Mucosa of descending colon (tissue), 3 donors: ENCODE measurements at regions of chr1 and their contacts with region 1.

Region 1: DNA sequence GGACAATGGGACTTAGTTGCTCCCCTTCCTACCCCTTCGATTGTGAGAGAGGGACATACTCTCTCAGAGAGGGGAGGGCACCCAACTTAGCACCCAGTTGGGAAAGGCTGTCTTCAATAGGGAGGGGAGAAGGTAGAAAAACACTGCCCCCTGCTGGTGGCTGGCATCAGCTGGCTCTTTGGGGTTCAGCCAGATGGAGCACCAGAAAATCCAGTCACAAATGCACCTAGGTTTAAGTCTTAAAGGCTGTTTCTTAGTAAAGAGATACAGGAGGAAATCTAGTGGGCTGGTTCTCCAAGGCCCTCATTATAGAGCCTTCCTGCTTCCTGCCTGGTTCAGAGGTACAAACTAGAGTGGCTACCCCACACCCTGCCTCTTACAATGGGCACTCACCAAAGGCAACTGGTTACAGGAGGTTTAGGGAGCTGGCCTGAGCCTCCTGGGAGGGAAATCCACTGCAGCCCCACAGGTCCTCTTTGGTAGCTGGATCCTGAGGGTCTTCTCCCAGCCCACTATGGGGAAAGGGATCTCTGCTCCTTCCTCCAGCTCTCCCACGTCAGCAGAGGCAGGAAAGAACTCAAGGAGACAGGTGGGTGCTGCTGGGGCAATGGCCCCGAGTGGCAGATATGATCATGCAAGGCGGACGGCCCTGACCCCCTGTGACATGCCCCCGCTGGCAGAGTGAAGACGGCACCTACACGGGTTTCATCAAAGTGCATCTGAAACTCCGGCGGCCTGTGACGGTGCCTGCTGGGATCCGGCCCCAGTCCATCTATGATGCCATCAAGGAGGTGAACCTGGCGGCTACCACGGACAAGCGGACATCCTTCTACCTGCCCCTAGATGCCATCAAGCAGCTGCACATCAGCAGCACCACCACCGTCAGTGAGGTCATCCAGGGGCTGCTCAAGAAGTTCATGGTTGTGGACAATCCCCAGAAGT is 28.3 kb downstream of the EIF2D start:
- DNase-seq: peak in 2 of 3 donors; percentile 81 to 93
- ATAC-seq: peak; percentile 69
- H3K4me3 ChIP-seq: no peak overlapping the region
- H3K4me1 ChIP-seq: peaks cover 2% of the 10 kb centered on the region
- CTCF ChIP-seq: peak; percentile 79

Region 2: GRCh38 chr1:206489980-206490770 is 93.8 kb before region 1 on chr1:
- intact Hi-C with region 1: loop called in 1 of 2 experiments (anchors 5 kb)
- DNase-seq: peak in 2 of 3 donors; percentile 79 to 82
- ATAC-seq: peak; percentile 89
- H3K4me3 ChIP-seq: no peak overlapping the region
- H3K4me1 ChIP-seq: no peaks in the 10 kb centered on the region
- CTCF ChIP-seq: peak; percentile 70

Region 3: DNA sequence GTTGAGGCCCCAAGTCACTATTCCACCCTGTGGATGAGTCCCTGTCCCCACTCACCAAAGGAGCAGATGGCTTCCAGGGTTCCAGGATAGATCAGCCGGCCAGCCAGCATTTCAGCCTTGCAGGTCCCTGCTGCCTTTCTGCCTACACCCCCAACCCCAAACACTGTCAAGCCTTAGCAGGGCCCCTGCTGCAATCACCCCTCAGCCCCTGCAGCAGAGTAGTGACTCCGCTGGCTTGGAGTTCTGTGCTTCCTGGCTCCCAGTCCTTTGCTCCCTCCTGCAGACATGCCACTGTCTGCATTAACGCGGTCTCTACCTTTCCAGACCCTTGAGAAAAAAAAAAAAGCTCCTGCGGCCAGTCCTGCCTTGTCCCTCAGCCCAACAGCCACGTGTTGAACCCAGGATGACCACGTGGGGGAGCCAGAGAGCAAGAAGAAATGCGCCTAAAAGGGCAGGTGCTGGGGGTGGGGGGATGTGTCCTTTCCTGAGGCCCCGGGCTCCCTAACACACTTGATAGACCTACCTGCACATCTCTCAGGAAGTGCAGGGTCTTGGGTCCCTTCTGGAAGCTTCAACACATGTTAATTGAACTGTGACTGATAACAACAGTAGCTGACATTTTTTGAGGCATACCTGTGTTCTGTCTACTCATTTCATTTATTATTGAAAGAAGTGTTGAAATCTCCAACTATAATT is 39.3 kb before region 1 on chr1:
- intact Hi-C with region 1: loop called in 1 of 2 experiments (anchors 5 kb)
- DNase-seq: peak in 2 of 3 donors; percentile 84 to 85
- ATAC-seq: peak; percentile 79
- H3K4me3 ChIP-seq: no peak overlapping the region
- H3K4me1 ChIP-seq: peaks cover 6% of the 10 kb centered on the region
- CTCF ChIP-seq: peak; percentile 77

Region 4: DNA sequence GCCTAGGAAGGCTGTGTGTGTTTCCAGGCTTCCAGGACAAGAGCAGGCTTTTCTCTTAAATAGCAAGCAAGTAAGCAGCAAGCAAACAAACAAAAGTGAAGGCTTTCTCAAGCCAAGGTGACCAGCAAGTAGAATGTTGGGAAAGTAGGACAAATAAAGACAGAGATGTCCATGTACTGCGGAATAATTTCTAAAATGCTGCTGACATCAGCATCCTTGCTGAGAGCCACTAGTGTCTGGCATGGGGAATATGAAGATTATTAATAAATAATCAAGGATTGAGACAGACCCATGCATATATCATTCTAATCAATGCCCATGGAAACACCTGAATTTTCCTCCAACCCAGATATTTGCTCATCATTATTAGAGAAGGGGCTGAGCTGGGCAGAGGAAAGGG is 44.9 kb after region 1 on chr1:
- intact Hi-C with region 1: no loop called
- DNase-seq: no peak
- ATAC-seq: no peak
- H3K4me3 ChIP-seq: no peak overlapping the region
- H3K4me1 ChIP-seq: no peaks in the 10 kb centered on the region
- CTCF ChIP-seq: no peak